Gastrocnemius medialis (tissue), 4 donors: ENCODE measurements at regions of chr1 and their contacts with region 1.

Region 1: GRCh38 chr1:224368409-224368808 is 11.7 kb downstream of the CNIH4 start:
- DNase-seq: no peak
- ATAC-seq: peak; percentile 51 to 53
- H3K4me3 ChIP-seq: no peak overlapping the region
- H3K27ac ChIP-seq: peak overlapping the region in 3 of 4 donors; percentile 24 to 58 (median 44)
- H3K4me1 ChIP-seq: peaks cover 13 to 22% of the 10 kb centered on the region in 2 donors
- H3K27me3 ChIP-seq: no peaks in the 10 kb centered on the region
- CTCF ChIP-seq: no peak
- POLR2A ChIP-seq: no peak

Region 2: DNA sequence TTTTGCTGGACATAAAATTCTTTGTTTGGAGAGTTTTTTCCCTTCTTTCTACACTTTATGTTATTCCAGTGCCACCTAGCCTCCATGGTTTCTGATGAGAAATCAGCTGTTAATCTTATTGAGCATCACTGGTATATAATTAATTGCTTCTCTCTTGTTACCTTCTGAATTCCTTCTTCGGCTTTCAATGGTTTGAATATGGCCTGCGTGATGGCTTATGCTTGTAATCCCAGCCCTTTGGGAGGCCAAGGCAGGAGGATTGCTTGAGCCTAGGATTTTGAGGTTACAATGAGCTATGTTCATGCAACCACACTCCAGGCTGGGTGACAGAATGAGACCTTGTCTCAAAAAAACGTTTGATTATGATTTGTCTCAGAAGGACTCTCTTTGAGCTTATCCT is 24.7 kb before region 1 on chr1:
- in situ Hi-C with region 1: no loop called
- intact Hi-C with region 1: loop called (anchors 1 kb)
- DNase-seq: no peak
- ATAC-seq: no peak
- H3K4me3 ChIP-seq: peak overlapping the region in 1 of 4 donors; percentile 34
- H3K27ac ChIP-seq: no peak overlapping the region
- H3K4me1 ChIP-seq: peaks cover 0 to 7% of the 10 kb centered on the region in 2 donors
- H3K27me3 ChIP-seq: peaks cover 0 to 16% (median 3%) of the 10 kb centered on the region in 3 donors
- CTCF ChIP-seq: no peak
- POLR2A ChIP-seq: no peak